CD4-positive, alpha-beta memory T cell (primary cell): ENCODE measurements at regions of chr3 and their contacts with region 1.

Region 1: GRCh38 chr3:45043728-45044299 is 17.7 kb downstream of the CLEC3B start:
- DNase-seq: no peak
- H3K4me3 ChIP-seq: no peak overlapping the region
- H3K4me3 Mint-ChIP-seq: no peak overlapping the region
- H3K27ac ChIP-seq: no peak overlapping the region
- H3K27ac Mint-ChIP-seq: no peak overlapping the region
- H3K4me1 ChIP-seq: peaks cover 14% of the 10 kb centered on the region
- H3K4me1 Mint-ChIP-seq: peaks cover 5 to 23% (median 13%) of the 10 kb centered on the region in 4 donors
- H3K27me3 ChIP-seq: no peaks in the 10 kb centered on the region
- H3K27me3 Mint-ChIP-seq: peaks cover 2 to 7% of the 10 kb centered on the region in 2 donors

Region 2: GRCh38 chr3:45055411-45056143 is 11.8 kb after region 1 on chr3:
- CTCF ChIA-PET with region 1: interaction called, 42 read pairs
- POLR2A ChIA-PET with region 1: no interaction called
- intact Hi-C with region 1: no loop called
- DNase-seq: no peak
- H3K4me3 ChIP-seq: no peak overlapping the region
- H3K4me3 Mint-ChIP-seq: no peak overlapping the region
- H3K27ac ChIP-seq: no peak overlapping the region
- H3K27ac Mint-ChIP-seq: no peak overlapping the region
- H3K4me1 ChIP-seq: no peaks in the 10 kb centered on the region
- H3K4me1 Mint-ChIP-seq: peaks cover 0 to 7% (median 4%) of the 10 kb centered on the region in 4 donors
- H3K27me3 ChIP-seq: no peaks in the 10 kb centered on the region
- H3K27me3 Mint-ChIP-seq: peaks cover 6 to 11% of the 10 kb centered on the region in 2 donors

Region 3: GRCh38 chr3:45118615-45119071 is 74.8 kb after region 1 on chr3:
- CTCF ChIA-PET with region 1: interaction called, 18 read pairs
- POLR2A ChIA-PET with region 1: no interaction called
- intact Hi-C with region 1: no loop called
- DNase-seq: no peak
- H3K4me3 ChIP-seq: no peak overlapping the region
- H3K4me3 Mint-ChIP-seq: peak overlapping the region in 1 of 8 donors; percentile 64
- H3K27ac ChIP-seq: no peak overlapping the region
- H3K27ac Mint-ChIP-seq: peak overlapping the region in 2 of 7 donors; percentile 33 to 77
- H3K4me1 ChIP-seq: peaks cover 18% of the 10 kb centered on the region
- H3K4me1 Mint-ChIP-seq: peaks cover 12 to 22% (median 20%) of the 10 kb centered on the region in 4 donors
- H3K27me3 ChIP-seq: no peaks in the 10 kb centered on the region
- H3K27me3 Mint-ChIP-seq: peaks cover 0 to 2% of the 10 kb centered on the region in 2 donors

Region 4: DNA sequence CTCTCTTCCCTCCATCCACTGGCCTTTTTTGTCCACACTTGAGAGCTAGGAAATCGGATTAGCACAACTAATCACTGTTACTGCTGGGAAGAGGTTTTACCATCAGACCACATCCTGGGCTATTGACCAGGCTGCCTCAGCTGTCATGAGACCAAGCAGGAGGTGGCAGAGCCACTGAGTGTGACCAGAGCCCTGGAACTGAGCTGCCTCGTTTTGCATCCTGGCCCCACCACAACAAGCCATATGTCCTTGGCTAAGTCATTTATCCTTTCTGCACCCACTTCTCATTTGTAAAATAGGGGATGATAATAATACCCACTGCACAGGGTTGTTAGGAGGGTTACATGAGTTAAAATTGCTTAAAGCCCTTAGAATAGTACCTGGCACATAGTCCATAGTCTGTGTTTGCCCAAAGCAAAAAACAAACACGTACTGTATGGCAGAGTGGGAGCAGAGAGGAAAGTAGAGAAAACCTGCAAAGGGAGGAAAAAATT is 148.2 kb after region 1 on chr3:
- CTCF ChIA-PET with region 1: interaction called, 14 read pairs
- POLR2A ChIA-PET with region 1: no interaction called
- intact Hi-C with region 1: no loop called
- DNase-seq: no peak
- H3K4me3 ChIP-seq: no peak overlapping the region
- H3K4me3 Mint-ChIP-seq: no peak overlapping the region
- H3K27ac ChIP-seq: no peak overlapping the region
- H3K27ac Mint-ChIP-seq: no peak overlapping the region
- H3K4me1 ChIP-seq: no peaks in the 10 kb centered on the region
- H3K4me1 Mint-ChIP-seq: no peaks in the 10 kb centered on the region
- H3K27me3 ChIP-seq: no peaks in the 10 kb centered on the region
- H3K27me3 Mint-ChIP-seq: peaks cover 6 to 7% of the 10 kb centered on the region in 2 donors

Region 5: GRCh38 chr3:45224824-45225464 is 181.1 kb after region 1 on chr3:
- CTCF ChIA-PET with region 1: interaction called, 29 read pairs
- POLR2A ChIA-PET with region 1: interaction called, 3 read pairs
- intact Hi-C with region 1: no loop called
- DNase-seq: peak in 2 of 5 donors; percentile 8 to 46
- H3K4me3 ChIP-seq: no peak overlapping the region
- H3K4me3 Mint-ChIP-seq: peak overlapping the region; percentile 79 to 90 (median 88)
- H3K27ac ChIP-seq: no peak overlapping the region
- H3K27ac Mint-ChIP-seq: peak overlapping the region in 2 of 7 donors; percentile 66 to 82
- H3K4me1 ChIP-seq: peaks cover 11% of the 10 kb centered on the region
- H3K4me1 Mint-ChIP-seq: peaks cover 7 to 17% (median 13%) of the 10 kb centered on the region in 4 donors
- H3K27me3 ChIP-seq: peaks cover 46% of the 10 kb centered on the region
- H3K27me3 Mint-ChIP-seq: peaks cover 52 to 69% of the 10 kb centered on the region in 2 donors

Region 6: GRCh38 chr3:45507820-45508317 is 464.1 kb after region 1 on chr3:
- CTCF ChIA-PET with region 1: interaction called, 14 read pairs
- POLR2A ChIA-PET with region 1: no interaction called
- intact Hi-C with region 1: no loop called
- DNase-seq: no peak
- H3K4me3 ChIP-seq: no peak overlapping the region
- H3K4me3 Mint-ChIP-seq: no peak overlapping the region
- H3K27ac ChIP-seq: no peak overlapping the region
- H3K27ac Mint-ChIP-seq: no peak overlapping the region
- H3K4me1 ChIP-seq: peaks cover 10% of the 10 kb centered on the region
- H3K4me1 Mint-ChIP-seq: peaks cover 0 to 4% (median 2%) of the 10 kb centered on the region in 4 donors
- H3K27me3 ChIP-seq: no peaks in the 10 kb centered on the region
- H3K27me3 Mint-ChIP-seq: no peaks in the 10 kb centered on the region